ENCODE measurements at regions of chr3 and their contacts with region 1.

Region 1: GRCh38 chr3:141105828-141106628 is 54.9 kb downstream of the SPSB4 start:
- DNase-seq: peak in 3 of 4 donors; percentile 58 to 91 (median 79)
- ATAC-seq: peak; percentile 87
- H3K4me3 ChIP-seq: no peak overlapping the region
- H3K27ac ChIP-seq: no peak overlapping the region
- H3K4me1 ChIP-seq: no peaks in the 10 kb centered on the region
- H3K27me3 ChIP-seq: no peaks in the 10 kb centered on the region
- CTCF ChIP-seq: peak; percentile 72 to 73

Region 2: GRCh38 chr3:141011232-141011996 is 94.6 kb before region 1 on chr3:
- intact Hi-C with region 1: loop called in 1 of 2 experiments (anchors 10 kb)
- DNase-seq: peak; percentile 66 to 88 (median 77)
- ATAC-seq: peak; percentile 92
- H3K4me3 ChIP-seq: no peak overlapping the region
- H3K27ac ChIP-seq: no peak overlapping the region
- H3K4me1 ChIP-seq: no peaks in the 10 kb centered on the region
- H3K27me3 ChIP-seq: peaks cover 0 to 13% of the 10 kb centered on the region in 2 donors
- CTCF ChIP-seq: peak; percentile 46 to 53

Measured in left lung (tissue), 14 donors.